Dendritic cell treated with granulocyte-macrophage colony-stimulating factor and Interleukin-4, amounts not matched to agents 40 ng/mL and 50 ng/mL, for 4 days (primary cell): ENCODE measurements at regions of chr1 and their contacts with region 1.

Region 1: DNA sequence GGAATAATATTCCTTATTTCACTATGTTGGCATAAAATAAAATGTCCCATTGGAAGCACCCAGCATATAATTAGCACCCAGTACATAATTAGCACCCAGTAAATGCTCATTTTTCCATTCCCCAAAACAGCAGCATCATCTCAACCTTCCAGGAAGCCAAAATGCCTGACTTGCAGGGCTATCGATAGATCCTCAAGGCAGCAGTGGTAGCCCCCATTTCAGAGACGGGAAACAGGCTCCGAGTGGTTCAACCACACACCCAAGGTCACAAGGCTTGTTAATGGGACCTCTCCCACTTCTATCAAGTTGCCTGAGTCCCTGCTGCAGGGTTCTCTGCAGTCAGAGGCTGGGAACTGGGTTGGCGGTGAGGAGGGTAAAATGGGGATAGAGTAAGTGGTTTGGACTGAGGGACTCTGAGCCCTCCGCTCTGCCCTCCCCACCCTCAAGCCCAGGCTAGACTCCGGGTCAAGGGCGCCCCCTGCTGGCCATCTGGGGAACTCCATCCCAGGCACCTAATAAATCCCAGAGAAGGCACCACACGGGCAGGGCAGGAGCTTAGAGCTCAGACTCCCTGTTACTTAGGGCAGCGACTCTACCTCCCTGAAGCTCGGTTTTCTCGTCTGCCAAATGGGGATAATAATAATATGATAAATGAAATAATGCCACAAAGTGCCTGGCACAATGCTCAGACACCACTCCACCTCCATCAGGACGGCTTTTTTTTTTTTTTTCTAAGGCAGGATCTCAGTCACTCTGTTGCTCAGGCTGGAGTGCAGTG is 21.9 kb upstream of the LAPTM5 start:
- H3K4me3 Mint-ChIP-seq: no peak overlapping the region
- H3K27ac Mint-ChIP-seq: peak overlapping the region; percentile 91
- H3K4me1 Mint-ChIP-seq: peaks cover 51% of the 10 kb centered on the region
- H3K27me3 Mint-ChIP-seq: peaks cover 12% of the 10 kb centered on the region

Region 2: DNA sequence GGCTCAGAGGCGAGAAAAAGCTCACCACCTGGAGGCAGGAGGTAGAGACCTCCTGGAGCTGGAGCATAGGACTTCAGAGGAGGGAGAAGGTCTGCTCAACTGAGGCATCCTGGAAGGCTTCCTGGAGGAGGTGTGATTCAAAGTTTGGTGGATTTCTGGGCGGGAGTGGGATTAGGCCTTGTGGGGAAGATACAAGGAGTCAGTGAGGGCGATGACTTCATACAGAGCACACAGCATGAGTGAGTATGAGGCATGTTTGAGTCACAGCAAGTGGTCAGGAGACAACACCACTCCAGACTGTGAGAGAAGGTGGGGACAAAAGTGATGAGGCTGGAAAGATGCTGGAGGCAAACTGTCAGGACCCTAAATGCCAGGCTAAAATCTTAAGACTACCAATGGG is 133.7 kb before region 1 on chr1:
- intact Hi-C with region 1: no loop called
- H3K4me3 Mint-ChIP-seq: no peak overlapping the region
- H3K27ac Mint-ChIP-seq: no peak overlapping the region
- H3K4me1 Mint-ChIP-seq: peaks cover 5% of the 10 kb centered on the region
- H3K27me3 Mint-ChIP-seq: peaks cover 31% of the 10 kb centered on the region

Region 3: DNA sequence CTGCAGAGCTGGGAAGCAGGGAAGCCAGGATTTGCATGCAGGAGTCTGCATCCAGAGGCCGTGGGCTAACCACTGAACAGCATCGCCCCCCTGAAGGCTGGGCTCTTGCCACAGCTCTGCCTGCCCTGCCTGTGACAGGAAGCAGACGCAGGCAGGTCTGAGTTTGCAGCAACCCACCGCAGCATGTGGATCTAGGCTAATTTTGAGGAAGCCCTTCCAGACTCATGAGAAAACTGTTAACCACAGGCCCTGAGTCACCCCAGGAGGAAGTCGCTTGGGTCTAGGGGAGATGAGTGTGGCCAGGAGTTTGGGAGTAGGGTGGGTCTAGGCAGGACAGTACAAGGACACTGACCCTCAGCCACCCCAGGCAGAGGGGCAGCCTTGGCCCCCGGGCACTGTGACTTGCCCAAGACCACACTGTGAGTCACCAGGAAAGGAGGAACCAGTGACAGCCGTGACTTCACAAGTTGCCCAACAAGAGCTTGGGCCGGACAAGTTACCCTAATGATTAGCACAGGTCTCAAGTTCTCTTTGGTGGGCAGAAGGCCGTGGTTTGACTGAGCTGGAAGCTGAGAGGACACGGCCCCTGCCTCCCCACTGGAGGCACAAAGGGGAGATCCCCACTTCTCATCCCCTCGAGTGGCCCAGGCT is 22.8 kb before region 1 on chr1:
- intact Hi-C with region 1: loop called (anchors 2 kb)
- H3K4me3 Mint-ChIP-seq: peak overlapping the region; percentile 95
- H3K27ac Mint-ChIP-seq: peak overlapping the region; percentile 98
- H3K4me1 Mint-ChIP-seq: peaks cover 91% of the 10 kb centered on the region
- H3K27me3 Mint-ChIP-seq: no peaks in the 10 kb centered on the region

Region 4: DNA sequence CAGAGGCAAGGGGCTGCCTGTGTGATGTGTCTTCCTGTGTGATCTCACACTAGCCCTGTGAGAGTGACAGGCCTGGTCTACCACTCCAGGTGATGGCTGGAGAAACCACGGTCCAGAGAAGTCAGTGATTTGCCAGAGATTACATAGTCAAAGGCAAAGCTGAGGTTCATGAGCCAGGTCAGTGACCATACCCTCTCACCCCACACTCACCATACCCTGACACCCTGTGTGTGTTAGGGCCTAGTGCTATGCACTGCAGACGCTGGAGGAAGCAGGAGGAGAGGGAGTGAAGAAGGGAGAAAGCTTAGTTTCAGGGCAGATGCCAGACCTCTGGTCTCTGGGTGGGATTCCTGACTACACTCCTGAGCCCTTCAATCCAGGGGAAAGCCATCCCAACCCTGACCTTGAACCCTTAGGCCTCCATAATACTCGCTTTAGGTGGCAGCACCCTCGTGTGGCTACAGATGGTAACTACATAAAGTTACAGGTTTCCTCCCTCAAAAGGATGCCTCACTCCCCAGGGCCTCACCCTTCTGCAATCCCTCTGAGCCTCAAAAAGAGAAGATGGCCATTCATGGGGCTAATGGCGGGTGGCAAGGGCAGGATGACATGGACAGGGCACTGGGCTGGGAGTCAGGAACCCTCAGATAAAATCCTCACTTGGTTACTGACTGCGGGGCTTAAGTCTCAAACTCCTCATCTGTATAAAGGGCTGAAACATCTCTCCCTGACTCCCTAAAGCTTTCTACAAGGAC is 149.8 kb after region 1 on chr1:
- intact Hi-C with region 1: loop called (anchors 5 kb)
- H3K4me3 Mint-ChIP-seq: no peak overlapping the region
- H3K27ac Mint-ChIP-seq: no peak overlapping the region
- H3K4me1 Mint-ChIP-seq: peaks cover 22% of the 10 kb centered on the region
- H3K27me3 Mint-ChIP-seq: no peaks in the 10 kb centered on the region